Activated naive CD4-positive, alpha-beta T cell treated with anti-CD3 and anti-CD28 coated beads, Interleukin-2, amount 10 ng/mL, durations not matched to agents 7 days and 5 days (primary cell): ENCODE measurements at regions of chr13 and their contacts with region 1.

Region 1: GRCh38 chr13:99656092-99656745 is 154.9 kb downstream of the TM9SF2 start:
- DNase-seq: peak; percentile 91
- H3K4me3 Mint-ChIP-seq: peak overlapping the region; percentile 55
- H3K27ac Mint-ChIP-seq: peak overlapping the region; percentile 99
- H3K4me1 Mint-ChIP-seq: peaks cover 55% of the 10 kb centered on the region
- H3K27me3 Mint-ChIP-seq: no peaks in the 10 kb centered on the region

Region 2: GRCh38 chr13:99671746-99672145 is 15.5 kb after region 1 on chr13:
- CTCF ChIA-PET with region 1: interaction called, 14 read pairs
- DNase-seq: no peak
- H3K4me3 Mint-ChIP-seq: no peak overlapping the region
- H3K27ac Mint-ChIP-seq: no peak overlapping the region
- H3K4me1 Mint-ChIP-seq: no peaks in the 10 kb centered on the region
- H3K27me3 Mint-ChIP-seq: peaks cover 12% of the 10 kb centered on the region

Region 3: GRCh38 chr13:99895995-99896786 is 240.0 kb after region 1 on chr13:
- CTCF ChIA-PET with region 1: interaction called, 25 read pairs
- DNase-seq: no peak
- H3K4me3 Mint-ChIP-seq: peak overlapping the region; percentile 61
- H3K27ac Mint-ChIP-seq: no peak overlapping the region
- H3K4me1 Mint-ChIP-seq: peaks cover 22% of the 10 kb centered on the region
- H3K27me3 Mint-ChIP-seq: peaks cover 76% of the 10 kb centered on the region

Region 4: DNA sequence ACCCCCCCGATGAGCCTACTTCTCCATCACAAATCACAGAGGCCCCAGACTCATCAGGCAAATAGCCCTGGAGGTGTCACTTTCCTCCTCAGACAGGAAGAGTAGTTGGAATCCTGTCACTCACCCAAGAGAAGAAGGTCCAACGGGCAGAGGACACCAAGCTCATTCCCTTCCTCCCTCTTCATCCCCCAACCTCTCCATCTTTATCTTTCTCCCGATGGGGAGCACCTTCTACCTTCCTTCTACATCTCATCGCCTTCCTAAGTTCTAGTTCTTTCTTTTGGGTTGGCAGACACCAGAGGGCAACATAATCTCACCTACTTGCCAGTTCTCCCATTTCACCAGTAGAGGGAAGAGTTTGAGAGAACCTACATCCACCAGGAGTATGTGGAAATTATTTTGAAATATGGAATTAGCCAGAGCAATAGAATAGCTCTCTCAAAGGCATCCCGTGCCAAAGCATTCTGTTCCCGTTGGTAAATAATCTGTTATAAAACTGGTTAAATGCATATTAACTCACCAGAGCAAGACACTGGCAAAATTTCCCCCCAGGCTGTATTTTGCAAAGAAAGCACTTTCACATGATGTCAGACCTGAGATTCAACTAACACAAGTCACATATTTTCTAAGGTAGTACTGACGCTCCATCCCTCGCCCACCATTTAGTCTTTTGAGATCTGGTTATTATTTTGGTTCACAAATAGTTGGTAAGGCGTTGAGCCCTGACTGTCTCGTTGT is 260.3 kb after region 1 on chr13:
- CTCF ChIA-PET with region 1: interaction called, 24 read pairs
- DNase-seq: peak; percentile 36
- H3K4me3 Mint-ChIP-seq: no peak overlapping the region
- H3K27ac Mint-ChIP-seq: no peak overlapping the region
- H3K4me1 Mint-ChIP-seq: peaks cover 32% of the 10 kb centered on the region
- H3K27me3 Mint-ChIP-seq: peaks cover 22% of the 10 kb centered on the region

Region 5: GRCh38 chr13:100235311-100235901 is 579.2 kb after region 1 on chr13:
- CTCF ChIA-PET with region 1: interaction called, 18 read pairs
- DNase-seq: no peak
- H3K4me3 Mint-ChIP-seq: no peak overlapping the region
- H3K27ac Mint-ChIP-seq: no peak overlapping the region
- H3K4me1 Mint-ChIP-seq: peaks cover 8% of the 10 kb centered on the region
- H3K27me3 Mint-ChIP-seq: no peaks in the 10 kb centered on the region

Region 6: DNA sequence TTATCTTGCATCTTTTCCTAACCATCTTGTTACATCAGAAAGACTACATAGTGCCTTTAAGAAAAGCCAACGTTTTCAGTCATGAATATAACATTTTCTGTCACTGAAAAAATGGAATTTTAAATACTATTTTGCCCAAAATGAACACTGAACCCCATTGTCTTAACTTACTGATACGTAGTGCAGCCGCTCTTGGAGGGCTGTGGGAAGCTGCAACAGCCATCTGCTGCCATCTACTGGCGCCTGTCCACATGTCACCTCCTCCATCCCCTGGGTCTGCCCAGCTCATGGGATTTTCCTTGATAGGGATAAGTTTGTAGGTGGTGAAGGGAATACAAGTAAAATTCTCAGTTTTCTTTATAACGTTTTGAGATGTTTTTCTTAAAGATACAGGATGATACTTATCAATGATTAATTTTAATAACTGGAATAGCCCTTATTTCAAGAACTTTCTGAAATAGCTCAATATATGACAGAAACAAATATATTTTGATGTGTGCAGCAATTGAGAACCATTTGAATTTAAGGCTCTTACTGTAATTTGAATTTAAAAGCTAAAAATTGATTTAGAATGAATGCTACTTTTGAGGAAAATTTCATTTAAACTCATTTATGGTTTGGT is 858.7 kb after region 1 on chr13:
- CTCF ChIA-PET with region 1: interaction called, 16 read pairs
- DNase-seq: peak; percentile 83
- H3K4me3 Mint-ChIP-seq: no peak overlapping the region
- H3K27ac Mint-ChIP-seq: no peak overlapping the region
- H3K4me1 Mint-ChIP-seq: peaks cover 18% of the 10 kb centered on the region
- H3K27me3 Mint-ChIP-seq: no peaks in the 10 kb centered on the region